ENCODE measurements at regions of chr3 and their contacts with region 1.

Region 1: GRCh38 chr3:87318617-87319021 is 42.2 kb upstream of the POU1F1 start:
- DNase-seq: no peak
- H3K4me3 ChIP-seq: no peak overlapping the region
- H3K4me3 Mint-ChIP-seq: peak overlapping the region; percentile 37
- H3K27ac Mint-ChIP-seq: peak overlapping the region; percentile 61
- H3K4me1 ChIP-seq: peaks cover 48% of the 10 kb centered on the region
- H3K4me1 Mint-ChIP-seq: peaks cover 23% of the 10 kb centered on the region
- H3K27me3 ChIP-seq: no peaks in the 10 kb centered on the region
- H3K27me3 Mint-ChIP-seq: no peaks in the 10 kb centered on the region
- CTCF ChIP-seq: no peak

Region 2: GRCh38 chr3:87333393-87333892 is 14.8 kb after region 1 on chr3:
- CTCF ChIA-PET with region 1: interaction called, 3 read pairs
- POLR2A ChIA-PET with region 1: no interaction called
- intact Hi-C with region 1: loop called (anchors 1 kb)
- DNase-seq: peak in 1 of 2 experiments; percentile 33
- H3K4me3 ChIP-seq: no peak overlapping the region
- H3K4me3 Mint-ChIP-seq: peak overlapping the region; percentile 31
- H3K27ac Mint-ChIP-seq: peak overlapping the region; percentile 79
- H3K4me1 ChIP-seq: peaks cover 21% of the 10 kb centered on the region
- H3K4me1 Mint-ChIP-seq: peaks cover 18% of the 10 kb centered on the region
- H3K27me3 ChIP-seq: no peaks in the 10 kb centered on the region
- H3K27me3 Mint-ChIP-seq: no peaks in the 10 kb centered on the region
- CTCF ChIP-seq: no peak